ENCODE measurements at regions of chr3 and their contacts with region 1.

Region 1: GRCh38 chr3:171566803-171567422 is 106.7 kb upstream of the TNIK start:
- DNase-seq: no peak
- ATAC-seq: peak; percentile 65
- H3K4me3 Mint-ChIP-seq: no peak overlapping the region
- H3K27ac Mint-ChIP-seq: no peak overlapping the region
- H3K4me1 Mint-ChIP-seq: peaks cover 18% of the 10 kb centered on the region
- H3K27me3 Mint-ChIP-seq: peaks cover 5% of the 10 kb centered on the region

Region 2: GRCh38 chr3:171049861-171050444 is 517.0 kb before region 1 on chr3:
- CTCF ChIA-PET with region 1: interaction called, 22 read pairs
- POLR2A ChIA-PET with region 1: no interaction called
- intact Hi-C with region 1: loop called (anchors 1 to 2 kb)
- DNase-seq: peak; percentile 70
- ATAC-seq: peak; percentile 80
- H3K4me3 Mint-ChIP-seq: no peak overlapping the region
- H3K27ac Mint-ChIP-seq: no peak overlapping the region
- H3K4me1 Mint-ChIP-seq: no peaks in the 10 kb centered on the region
- H3K27me3 Mint-ChIP-seq: peaks cover 5% of the 10 kb centered on the region

Region 3: GRCh38 chr3:171187706-171188290 is 379.1 kb before region 1 on chr3:
- CTCF ChIA-PET with region 1: interaction called, 19 read pairs
- POLR2A ChIA-PET with region 1: no interaction called
- intact Hi-C with region 1: loop called (anchors 2 kb)
- DNase-seq: no peak
- ATAC-seq: no peak
- H3K4me3 Mint-ChIP-seq: no peak overlapping the region
- H3K27ac Mint-ChIP-seq: no peak overlapping the region
- H3K4me1 Mint-ChIP-seq: peaks cover 51% of the 10 kb centered on the region
- H3K27me3 Mint-ChIP-seq: no peaks in the 10 kb centered on the region

Region 4: DNA sequence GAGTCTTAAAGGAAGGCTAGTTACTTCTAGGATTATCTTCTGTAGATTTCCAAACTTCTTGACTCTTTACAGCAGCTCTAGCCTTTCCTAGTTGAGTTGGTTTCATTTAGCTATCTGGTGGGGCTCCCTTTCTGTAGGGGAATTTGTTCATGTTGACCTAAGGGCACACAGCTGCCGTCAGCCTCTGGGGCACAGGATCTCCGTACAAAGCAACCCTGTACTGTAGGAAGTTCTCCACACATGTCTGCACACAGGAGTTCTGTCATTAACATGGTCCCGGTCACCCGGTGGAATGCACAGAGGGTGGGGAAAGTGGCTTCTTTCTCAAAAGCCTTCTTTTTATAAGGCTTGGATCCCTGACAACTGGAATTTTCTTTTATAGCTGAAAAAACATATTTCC is 18.0 kb before region 1 on chr3:
- CTCF ChIA-PET with region 1: interaction called, 12 read pairs
- POLR2A ChIA-PET with region 1: no interaction called
- intact Hi-C with region 1: no loop called
- DNase-seq: no peak
- ATAC-seq: no peak
- H3K4me3 Mint-ChIP-seq: no peak overlapping the region
- H3K27ac Mint-ChIP-seq: no peak overlapping the region
- H3K4me1 Mint-ChIP-seq: peaks cover 4% of the 10 kb centered on the region
- H3K27me3 Mint-ChIP-seq: no peaks in the 10 kb centered on the region